Cardiac septum (tissue), 1 donor: ENCODE measurements at regions of chr2 and their contacts with region 1.

Region 1: DNA sequence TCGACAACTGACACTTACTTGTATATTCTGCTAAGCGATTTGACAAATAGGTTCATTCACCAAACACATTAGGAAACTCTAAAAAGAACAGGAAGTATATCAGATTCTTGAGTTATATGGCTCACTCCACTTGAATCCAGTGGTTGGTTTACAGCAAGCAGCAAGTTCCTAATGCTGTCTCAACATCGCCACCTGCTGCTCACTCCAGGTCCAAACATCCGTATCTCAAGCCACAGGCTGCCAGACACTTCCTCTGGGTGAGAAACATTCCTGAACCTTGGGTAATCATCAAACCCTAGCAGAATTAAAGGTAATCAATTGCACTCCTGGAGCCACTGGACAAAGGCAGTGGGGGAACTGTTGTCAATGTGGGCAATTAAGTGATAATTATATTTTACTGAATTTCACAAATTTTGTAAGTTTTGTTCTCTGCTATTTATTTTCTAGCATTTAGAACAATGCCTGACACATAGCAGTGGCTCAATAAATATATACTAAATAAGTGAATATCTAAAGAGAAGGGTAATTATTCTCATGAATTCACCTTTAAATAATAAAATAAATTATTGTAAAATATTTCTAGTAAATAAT is 107.1 kb upstream of the TTN start:
- DNase-seq: peak; percentile 82

Region 2: GRCh38 chr2:178796079-178796677 is 118.2 kb before region 1 on chr2:
- intact Hi-C with region 1: loop called (anchors 1 kb)
- DNase-seq: no peak

Region 3: GRCh38 chr2:178891265-178891958 is 22.9 kb before region 1 on chr2:
- intact Hi-C with region 1: loop called (anchors 2 kb)
- DNase-seq: no peak

Region 4: DNA sequence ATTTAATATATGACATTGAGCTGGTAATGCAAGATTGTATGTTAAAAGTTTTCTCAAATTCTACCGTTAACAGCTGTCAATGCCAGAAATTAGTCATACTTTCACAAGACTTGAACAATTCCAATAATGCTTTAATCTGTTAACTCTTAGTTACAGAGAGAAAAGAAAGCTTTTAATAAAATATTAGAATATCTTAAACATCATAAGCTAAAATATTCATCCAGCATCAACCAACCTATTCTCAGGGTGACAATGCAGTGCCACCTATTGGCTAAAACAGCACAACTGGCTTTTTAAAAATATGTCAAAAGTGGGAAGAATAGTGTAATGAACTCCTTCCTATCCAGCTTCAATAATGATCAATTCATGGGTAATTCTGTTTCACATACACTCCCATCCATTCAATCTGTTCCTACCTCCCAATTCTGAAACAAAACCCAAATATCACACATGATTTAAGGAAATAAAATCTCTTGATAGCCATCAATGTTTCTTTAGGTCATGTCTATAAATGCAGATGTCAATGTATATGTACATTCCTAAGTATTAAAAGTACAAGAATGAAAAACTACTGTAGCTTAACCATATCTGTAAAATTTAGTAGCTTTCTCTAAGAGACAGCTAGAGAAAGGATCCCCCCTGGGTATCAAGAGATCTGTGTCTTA is 215.4 kb after region 1 on chr2:
- intact Hi-C with region 1: loop called (anchors 5 kb)
- DNase-seq: no peak